SK-N-SH (cell line): ENCODE measurements at regions of chr15 and their contacts with region 1.

Region 1: DNA sequence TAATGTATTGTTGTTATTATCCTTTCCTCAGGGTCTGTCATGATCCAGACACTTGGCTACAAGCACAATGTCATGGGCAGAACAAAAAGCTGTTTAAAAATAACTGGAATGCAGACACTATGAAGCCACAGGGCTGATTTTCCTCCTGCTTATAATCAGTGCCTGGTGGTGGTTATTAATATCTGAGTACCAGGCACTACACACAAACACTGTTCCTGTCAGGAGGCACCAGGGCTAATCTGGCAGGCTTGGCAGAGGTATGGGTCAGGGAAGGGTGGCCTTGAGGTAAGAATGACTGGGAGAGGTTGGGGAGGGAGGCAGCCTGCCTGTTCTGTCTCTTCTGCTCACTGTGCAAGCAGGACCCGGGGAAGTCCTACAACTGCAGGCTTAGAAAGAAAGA is 67.2 kb downstream of the WDR76 start:
- DNase-seq: peak; percentile 23
- H3K4me3 ChIP-seq: no peak overlapping the region
- H3K27ac ChIP-seq: peak overlapping the region in 1 of 2 experiments; percentile 74; a peak in 2 of 4 replicates
- H3K4me1 ChIP-seq: peaks cover 0 to 31% of the 10 kb centered on the region in 2 experiments; a peak in 1 of 4 replicates
- H3K27me3 ChIP-seq: no peaks in the 10 kb centered on the region
- CTCF ChIP-seq: no peak
- EP300 ChIP-seq: no peak
- RAD21 ChIP-seq: no peak

Region 2: GRCh38 chr15:43881944-43882343 is 12.0 kb before region 1 on chr15:
- CTCF ChIA-PET with region 1: interaction called, 15 read pairs
- POLR2A ChIA-PET with region 1: no interaction called
- DNase-seq: no peak
- H3K4me3 ChIP-seq: no peak overlapping the region
- H3K27ac ChIP-seq: no peak overlapping the region
- H3K4me1 ChIP-seq: peaks cover 0 to 3% of the 10 kb centered on the region in 2 experiments; a peak in 1 of 4 replicates
- H3K27me3 ChIP-seq: no peaks in the 10 kb centered on the region
- CTCF ChIP-seq: peak; percentile 58
- EP300 ChIP-seq: no peak
- RAD21 ChIP-seq: peak; percentile 26; the same call in 1 of the 2 replicates